BJ (cell line): ENCODE measurements at regions of chr20 and their contacts with region 1.

Region 1: GRCh38 chr20:38790200-38791053 is 15.1 kb upstream of the PPP1R16B start:
- DNase-seq: no peak
- H3K4me3 ChIP-seq: no peak overlapping the region
- H3K27me3 ChIP-seq: no peaks in the 10 kb centered on the region; the same call in none of the 2 replicates
- CTCF ChIP-seq: peak; percentile 66

Region 2: DNA sequence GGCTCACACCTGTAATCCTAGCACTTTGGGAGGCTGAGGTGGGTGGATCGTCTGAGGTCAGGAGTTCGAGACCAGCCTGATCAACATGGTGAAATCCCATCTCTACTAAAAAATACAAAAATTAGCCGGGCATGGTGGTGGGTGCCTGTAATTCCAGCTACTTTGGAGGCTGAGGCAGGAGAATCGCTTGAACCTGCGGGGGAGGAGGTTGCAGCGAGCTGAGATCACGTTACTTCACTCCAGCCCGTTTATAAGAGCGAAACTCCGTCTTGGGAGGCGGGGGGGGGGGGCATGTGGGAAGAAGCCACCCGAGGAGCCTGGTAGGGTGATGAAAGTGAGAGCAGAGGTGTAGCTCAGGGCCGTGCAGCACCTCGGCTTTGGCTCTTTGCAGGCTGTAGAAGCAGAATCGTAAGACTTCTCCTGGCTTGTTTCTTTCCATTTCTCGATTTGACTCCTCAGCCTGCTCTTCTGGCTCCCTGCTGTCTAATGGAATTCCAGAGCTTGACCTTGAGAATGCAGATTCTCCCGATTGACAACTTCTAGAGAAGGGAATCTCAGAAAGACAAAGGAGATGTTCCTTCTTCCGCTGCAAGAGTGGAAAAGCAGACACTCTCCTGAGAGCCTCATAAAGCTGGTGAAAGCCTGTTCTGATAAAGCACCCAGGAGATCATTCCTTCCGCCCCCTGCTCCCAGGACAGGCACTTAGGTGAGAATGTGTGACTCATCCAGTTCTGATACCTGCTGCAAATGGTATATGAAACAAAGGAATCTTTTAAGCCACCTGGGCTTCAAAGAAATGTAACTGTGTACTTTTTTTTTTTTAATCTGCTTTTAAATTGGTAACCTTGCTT is 11.0 kb before region 1 on chr20:
- CTCF ChIA-PET with region 1: interaction called, 11 read pairs
- POLR2A ChIA-PET with region 1: no interaction called
- DNase-seq: no peak
- H3K4me3 ChIP-seq: no peak overlapping the region
- H3K27me3 ChIP-seq: no peaks in the 10 kb centered on the region
- CTCF ChIP-seq: no peak